Ascending aorta (tissue), 2 donors: ENCODE measurements at regions of chr14 and their contacts with region 1.

Region 1: DNA sequence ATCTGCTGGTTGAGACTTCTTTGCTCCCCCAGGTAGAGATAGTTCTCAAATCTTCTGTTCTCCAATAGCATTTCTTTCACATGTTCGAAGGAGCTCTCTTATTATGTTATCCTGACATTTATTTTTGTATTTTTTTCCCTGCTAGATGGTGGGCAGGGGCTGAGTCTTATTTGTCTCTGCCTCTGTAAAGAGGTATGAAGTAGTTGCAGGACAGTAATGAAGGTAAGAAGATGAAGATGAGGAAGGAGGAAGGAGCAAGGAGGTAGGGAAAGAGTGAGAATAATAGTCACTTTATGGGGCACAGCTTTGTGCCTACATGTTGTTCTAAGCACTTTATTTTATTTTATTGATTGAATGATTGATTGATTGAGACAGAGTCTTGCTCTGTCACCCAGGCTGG is 5.0 kb upstream of the CIROP start:
- DNase-seq: no peak
- H3K4me3 ChIP-seq: no peak overlapping the region
- H3K27ac ChIP-seq: no peak overlapping the region
- H3K4me1 ChIP-seq: peaks cover 0 to 3% of the 10 kb centered on the region in 2 donors
- H3K27me3 ChIP-seq: no peaks in the 10 kb centered on the region
- CTCF ChIP-seq: no peak

Region 2: DNA sequence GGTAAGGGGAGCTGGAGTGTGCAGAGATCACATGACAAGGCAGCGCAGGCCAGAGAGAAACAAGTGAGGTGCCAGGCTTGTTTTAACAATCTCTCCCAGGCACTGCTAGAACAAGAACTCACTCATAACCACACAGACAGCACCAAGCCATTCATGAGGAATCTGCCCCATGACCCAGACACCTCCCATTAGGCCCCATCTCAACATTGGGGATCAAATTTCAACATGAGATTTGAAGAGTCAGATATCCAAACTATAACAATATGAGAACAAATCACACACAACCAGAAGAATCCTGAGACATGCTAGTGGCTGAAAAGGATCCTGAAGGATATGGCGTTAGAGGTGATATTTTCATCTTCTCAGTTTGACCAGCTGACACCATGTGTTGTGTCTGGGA is 487.5 kb before region 1 on chr14:
- intact Hi-C with region 1: no loop called
- DNase-seq: no peak
- H3K4me3 ChIP-seq: no peak overlapping the region
- H3K27ac ChIP-seq: no peak overlapping the region
- H3K4me1 ChIP-seq: no peaks in the 10 kb centered on the region
- H3K27me3 ChIP-seq: no peaks in the 10 kb centered on the region
- CTCF ChIP-seq: no peak

Region 3: DNA sequence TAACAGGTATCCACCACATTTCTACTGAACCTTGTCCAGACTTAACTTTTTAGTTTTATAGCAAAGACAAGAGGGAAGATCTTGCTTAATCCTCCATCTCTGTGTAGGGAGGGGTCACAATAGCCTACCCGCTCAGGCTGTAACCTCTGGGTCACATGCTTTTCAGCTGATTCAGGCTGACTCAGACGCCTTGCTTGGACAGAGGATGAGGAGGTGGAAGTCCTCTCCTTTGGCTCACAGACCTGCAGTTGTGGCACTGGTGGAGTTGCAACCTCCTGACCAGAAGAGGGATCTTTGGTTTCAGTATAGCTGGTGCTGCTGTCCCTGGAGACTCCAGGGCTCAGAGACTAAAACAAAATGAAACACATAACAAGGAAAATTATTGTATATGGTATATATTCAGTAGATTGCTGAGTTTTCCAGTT is 31.1 kb before region 1 on chr14:
- intact Hi-C with region 1: loop called (anchors 1 kb)
- DNase-seq: peak; percentile 41 to 88
- H3K4me3 ChIP-seq: no peak overlapping the region
- H3K27ac ChIP-seq: peak overlapping the region; percentile 51 to 58
- H3K4me1 ChIP-seq: peaks cover 3 to 4% of the 10 kb centered on the region in 2 donors
- H3K27me3 ChIP-seq: no peaks in the 10 kb centered on the region
- CTCF ChIP-seq: no peak

Region 4: GRCh38 chr14:24513009-24513408 is 1403.2 kb after region 1 on chr14:
- intact Hi-C with region 1: no loop called
- DNase-seq: no peak
- H3K4me3 ChIP-seq: no peak overlapping the region
- H3K27ac ChIP-seq: no peak overlapping the region
- H3K4me1 ChIP-seq: no peaks in the 10 kb centered on the region
- H3K27me3 ChIP-seq: no peaks in the 10 kb centered on the region
- CTCF ChIP-seq: no peak